MCF 10A (cell line): ENCODE measurements at regions of chr1 and their contacts with region 1.

Region 1: GRCh38 chr1:205523891-205524793 is 19.7 kb downstream of the CDK18 start:
- DNase-seq: peak; percentile 95
- H3K4me3 Mint-ChIP-seq: no peak overlapping the region
- H3K27ac Mint-ChIP-seq: no peak overlapping the region
- H3K4me1 Mint-ChIP-seq: no peaks in the 10 kb centered on the region
- H3K27me3 Mint-ChIP-seq: no peaks in the 10 kb centered on the region
- CTCF ChIP-seq: peak; percentile 99

Region 2: DNA sequence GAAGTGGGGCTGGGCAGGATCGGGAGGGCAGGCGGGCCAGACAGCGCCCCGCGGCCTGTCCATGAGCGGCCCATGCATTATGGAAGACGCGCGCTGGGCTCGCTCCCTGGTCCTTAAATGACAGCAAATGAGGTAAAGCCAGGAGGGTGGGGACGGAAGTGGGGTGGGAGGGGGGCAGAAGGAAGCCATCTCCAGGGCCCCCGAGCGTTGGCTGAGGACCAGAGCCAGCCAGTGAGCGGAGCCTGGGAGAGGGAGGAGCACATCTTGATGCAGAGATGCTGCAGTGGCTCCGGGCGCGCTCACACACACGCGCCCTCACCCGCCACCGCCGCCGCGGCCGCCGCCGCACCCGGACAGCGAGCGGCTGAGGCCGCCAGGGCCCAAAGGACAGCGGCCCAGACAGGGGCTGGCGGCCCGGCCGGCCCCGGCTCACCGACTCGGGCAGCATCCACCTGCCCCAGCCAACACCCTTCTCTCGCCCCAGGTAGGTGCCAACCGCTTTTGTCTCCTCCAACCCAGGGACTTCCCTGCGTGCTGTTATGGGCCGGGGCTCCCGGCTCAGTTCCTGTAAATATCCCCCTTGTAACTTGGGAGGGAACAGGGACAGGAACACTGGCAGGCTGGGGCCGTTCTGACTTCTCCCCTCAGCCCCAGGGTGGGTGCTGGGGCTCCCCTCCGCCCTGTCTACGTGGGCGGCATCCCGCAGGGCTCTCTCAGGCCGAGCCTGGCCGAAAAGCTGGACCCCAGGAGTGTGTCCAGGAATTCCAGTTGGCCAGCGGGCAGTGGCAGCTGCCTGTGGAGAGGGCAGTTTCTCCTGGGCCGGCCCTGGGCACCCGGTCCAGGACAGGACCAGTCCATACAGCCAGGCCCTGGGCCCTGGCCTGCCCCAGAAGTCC is 481.0 kb before region 1 on chr1 and contains the start of gene CNTN2:
- CTCF ChIA-PET with region 1: no interaction called
- POLR2A ChIA-PET with region 1: no interaction called
- intact Hi-C with region 1: no loop called
- DNase-seq: no peak
- H3K4me3 Mint-ChIP-seq: no peak within 1 kb of the TSS
- H3K27ac Mint-ChIP-seq: no peak within 1 kb of the TSS
- H3K4me1 Mint-ChIP-seq: no peaks in the 10 kb centered on the region
- H3K27me3 Mint-ChIP-seq: peaks cover 84% of the 10 kb centered on the region
- CTCF ChIP-seq: no peak
- total RNA-seq, gene CNTN2: 0.05 TPM in 1 of 2 replicates, not detected in the other

Region 3: DNA sequence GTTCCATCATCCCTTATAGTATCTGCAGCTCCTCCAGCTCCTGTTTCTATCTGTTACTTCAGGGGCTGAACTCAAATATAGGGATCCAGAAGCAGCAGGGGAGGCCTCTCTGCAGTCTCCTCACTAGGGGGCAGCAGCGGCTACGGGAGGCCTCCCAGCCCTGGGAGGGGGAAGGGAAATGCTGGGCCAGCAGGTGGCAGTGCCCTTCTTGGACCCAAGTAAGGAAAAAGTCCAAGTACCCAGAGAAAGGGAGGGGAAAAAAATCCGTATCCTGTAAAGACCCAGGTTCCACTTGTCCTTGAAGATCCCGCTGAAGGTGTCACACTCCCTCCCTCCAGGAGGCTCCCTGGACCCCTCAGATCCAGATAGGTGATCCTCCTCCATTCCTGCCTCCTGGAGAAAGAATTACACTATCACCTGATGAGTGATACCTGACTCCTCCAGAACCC is 188.5 kb before region 1 on chr1:
- CTCF ChIA-PET with region 1: interaction called, 230 read pairs
- POLR2A ChIA-PET with region 1: interaction called, 5 read pairs
- intact Hi-C with region 1: loop called (anchors 1 kb)
- DNase-seq: peak; percentile 97
- H3K4me3 Mint-ChIP-seq: no peak overlapping the region
- H3K27ac Mint-ChIP-seq: no peak overlapping the region
- H3K4me1 Mint-ChIP-seq: peaks cover 4% of the 10 kb centered on the region
- H3K27me3 Mint-ChIP-seq: peaks cover 17% of the 10 kb centered on the region
- CTCF ChIP-seq: peak; percentile 100

Region 4: GRCh38 chr1:205396967-205397616 is 127.0 kb before region 1 on chr1:
- CTCF ChIA-PET with region 1: interaction called, 130 read pairs
- POLR2A ChIA-PET with region 1: interaction called, 21 read pairs
- intact Hi-C with region 1: loop called (anchors 1 kb)
- DNase-seq: peak; percentile 87
- H3K4me3 Mint-ChIP-seq: no peak overlapping the region
- H3K27ac Mint-ChIP-seq: no peak overlapping the region
- H3K4me1 Mint-ChIP-seq: peaks cover 4% of the 10 kb centered on the region
- H3K27me3 Mint-ChIP-seq: peaks cover 27% of the 10 kb centered on the region
- CTCF ChIP-seq: peak; percentile 99

Region 5: GRCh38 chr1:205477759-205478247 is 46.3 kb before region 1 on chr1:
- CTCF ChIA-PET with region 1: interaction called, 1,608 read pairs
- POLR2A ChIA-PET with region 1: no interaction called
- intact Hi-C with region 1: no loop called
- DNase-seq: peak; percentile 100
- H3K4me3 Mint-ChIP-seq: no peak overlapping the region
- H3K27ac Mint-ChIP-seq: peak overlapping the region; percentile 33
- H3K4me1 Mint-ChIP-seq: peaks cover 15% of the 10 kb centered on the region
- H3K27me3 Mint-ChIP-seq: peaks cover 40% of the 10 kb centered on the region
- CTCF ChIP-seq: no peak

Region 6: GRCh38 chr1:205536759-205537361 is 12.7 kb after region 1 on chr1:
- CTCF ChIA-PET with region 1: interaction called, 90 read pairs
- POLR2A ChIA-PET with region 1: interaction called, 3 read pairs
- intact Hi-C with region 1: no loop called
- DNase-seq: peak; percentile 55
- H3K4me3 Mint-ChIP-seq: no peak overlapping the region
- H3K27ac Mint-ChIP-seq: no peak overlapping the region
- H3K4me1 Mint-ChIP-seq: peaks cover 11% of the 10 kb centered on the region
- H3K27me3 Mint-ChIP-seq: no peaks in the 10 kb centered on the region
- CTCF ChIP-seq: no peak

Region 7: GRCh38 chr1:205600085-205600484 is 75.9 kb after region 1 on chr1:
- CTCF ChIA-PET with region 1: interaction called, 10 read pairs
- POLR2A ChIA-PET with region 1: no interaction called
- intact Hi-C with region 1: no loop called
- DNase-seq: peak; percentile 42
- H3K4me3 Mint-ChIP-seq: no peak overlapping the region
- H3K27ac Mint-ChIP-seq: peak overlapping the region; percentile 55
- H3K4me1 Mint-ChIP-seq: peaks cover 26% of the 10 kb centered on the region
- H3K27me3 Mint-ChIP-seq: no peaks in the 10 kb centered on the region
- CTCF ChIP-seq: peak; percentile 17